ENCODE measurements at regions of chr15 and their contacts with region 1.

Region 1: DNA sequence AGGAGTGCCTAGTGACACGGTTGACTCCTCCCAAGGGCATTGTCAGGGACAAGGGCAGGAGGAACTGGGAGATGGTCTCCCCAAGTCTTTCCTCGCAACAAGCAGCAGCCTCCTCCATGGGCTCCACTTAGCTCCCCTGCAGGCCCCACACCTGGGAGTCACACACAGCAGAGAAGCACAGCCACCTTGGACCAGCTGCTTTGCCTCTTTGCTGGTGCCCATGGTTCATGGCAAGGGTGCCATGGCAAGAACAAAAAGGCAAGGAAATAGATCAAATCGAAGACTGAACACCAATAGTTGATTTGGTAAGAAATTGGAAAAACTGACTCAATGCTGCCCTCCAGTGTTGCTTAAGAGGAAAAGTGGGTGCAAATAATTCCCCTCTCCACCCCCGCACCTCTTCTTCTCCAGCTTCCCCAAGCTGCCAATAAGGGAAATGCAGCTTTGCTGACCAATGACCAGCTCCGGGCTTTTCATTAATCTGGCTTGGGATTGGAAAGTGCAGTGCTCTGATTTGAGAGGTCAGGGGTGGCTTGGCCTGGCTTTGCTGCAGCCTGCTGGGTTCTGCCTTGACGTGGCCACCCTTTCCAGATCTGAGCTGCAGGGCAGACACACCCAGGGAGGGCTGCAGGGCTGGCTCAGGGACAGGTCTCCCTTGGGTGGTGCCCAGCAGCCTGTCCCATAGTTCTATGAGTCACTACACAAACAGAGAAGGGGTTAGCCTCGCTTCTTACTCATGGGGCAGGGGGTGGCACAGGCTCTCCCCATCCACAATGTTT is 162.0 kb downstream of the KLF13 start:
- DNase-seq: peak; percentile 80
- ATAC-seq: peak; percentile 93
- H3K4me3 ChIP-seq: 0 out of 4 replicates have a peak overlapping the region, but pooled peaks of 1 of the 2 experiments have one; percentile 9
- H3K27ac ChIP-seq: peak overlapping the region; percentile 47; the same call in 1 of the 2 replicates
- H3K4me1 ChIP-seq: peaks cover 19 to 21% of the 10 kb centered on the region in 2 experiments
- H3K27me3 ChIP-seq: no peaks in the 10 kb centered on the region
- CTCF ChIP-seq: peak; percentile 78 to 90 (median 84)
- POLR2A ChIP-seq: no peak
- RAD21 ChIP-seq: peak; percentile 77

Region 2: DNA sequence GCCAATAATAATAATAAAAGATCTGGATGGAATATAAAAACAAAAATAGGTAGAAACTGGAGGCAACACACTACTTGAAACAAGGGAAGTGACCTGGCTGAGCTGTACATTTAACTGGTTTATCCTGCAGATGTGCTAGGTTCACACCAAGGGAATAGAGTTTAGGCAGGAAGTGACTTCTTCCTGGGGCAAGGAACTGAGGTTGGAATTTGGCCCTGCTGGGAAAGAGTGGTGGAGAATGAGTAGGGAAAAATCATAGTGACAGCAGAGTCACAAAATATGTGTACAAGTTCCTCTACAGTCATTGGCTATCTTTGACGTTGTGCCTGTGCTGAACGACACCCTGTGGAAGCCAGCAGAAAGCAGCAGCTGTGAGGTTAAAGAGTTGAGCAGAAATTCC is 818.6 kb before region 1 on chr15:
- CTCF ChIA-PET with region 1: interaction called, 3 read pairs
- POLR2A ChIA-PET with region 1: no interaction called
- RAD21 ChIA-PET with region 1: no interaction called
- intact Hi-C with region 1: loop called (anchors 10 kb)
- DNase-seq: no peak
- ATAC-seq: no peak
- H3K4me3 ChIP-seq: no peak overlapping the region
- H3K27ac ChIP-seq: no peak overlapping the region
- H3K4me1 ChIP-seq: no peaks in the 10 kb centered on the region
- H3K27me3 ChIP-seq: no peaks in the 10 kb centered on the region
- CTCF ChIP-seq: no peak
- POLR2A ChIP-seq: no peak
- RAD21 ChIP-seq: no peak

Region 3: DNA sequence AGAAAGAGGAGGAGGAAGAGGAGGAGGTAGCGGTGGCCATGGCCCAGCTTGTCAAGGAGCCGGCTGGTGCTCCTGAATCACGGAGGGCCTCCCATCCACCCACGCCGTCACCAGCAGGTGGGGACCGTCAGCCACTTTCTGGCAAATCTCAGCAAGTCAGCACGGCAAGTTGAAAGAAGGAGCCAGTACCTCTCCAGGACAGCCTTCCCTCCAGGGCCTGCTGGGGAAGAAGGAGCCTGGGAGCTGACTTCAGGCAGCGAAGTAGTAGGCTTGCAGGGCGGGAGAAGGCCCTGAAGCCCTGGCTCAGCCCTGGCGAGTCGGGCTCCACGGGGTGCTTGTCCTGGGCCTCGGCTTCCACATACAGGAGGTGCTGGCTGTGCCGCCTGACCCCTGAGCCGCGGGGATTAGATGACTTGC is 287.9 kb before region 1 on chr15:
- CTCF ChIA-PET with region 1: interaction called, 16 read pairs
- POLR2A ChIA-PET with region 1: no interaction called
- RAD21 ChIA-PET with region 1: interaction called in 1 of 2 experiments, 5 read pairs
- intact Hi-C with region 1: loop called (anchors 2 kb)
- DNase-seq: no peak
- ATAC-seq: peak; percentile 80
- H3K4me3 ChIP-seq: no peak overlapping the region
- H3K27ac ChIP-seq: no peak overlapping the region
- H3K4me1 ChIP-seq: no peaks in the 10 kb centered on the region
- H3K27me3 ChIP-seq: no peaks in the 10 kb centered on the region; the same call in 1 of the 2 replicates
- CTCF ChIP-seq: peak; percentile 32 to 45 (median 36); a peak in 4 of 6 replicates
- POLR2A ChIP-seq: no peak
- RAD21 ChIP-seq: peak; percentile 57

Region 4: GRCh38 chr15:31326156-31326732 is 162.4 kb before region 1 on chr15:
- CTCF ChIA-PET with region 1: interaction called, 6 read pairs
- POLR2A ChIA-PET with region 1: no interaction called
- RAD21 ChIA-PET with region 1: no interaction called
- intact Hi-C with region 1: loop called (anchors 2 kb)
- DNase-seq: peak; percentile 91
- ATAC-seq: peak; percentile 84
- H3K4me3 ChIP-seq: peak overlapping the region; percentile 56 to 80
- H3K27ac ChIP-seq: peak overlapping the region; percentile 94
- H3K4me1 ChIP-seq: peaks cover 11 to 24% of the 10 kb centered on the region in 2 experiments; a peak in 2 of 4 replicates
- H3K27me3 ChIP-seq: no peaks in the 10 kb centered on the region
- CTCF ChIP-seq: no peak
- POLR2A ChIP-seq: peak; percentile 30
- RAD21 ChIP-seq: no peak

Region 5: GRCh38 chr15:31435261-31435911 is 53.2 kb before region 1 on chr15:
- CTCF ChIA-PET with region 1: interaction called, 35 read pairs
- POLR2A ChIA-PET with region 1: no interaction called
- RAD21 ChIA-PET with region 1: interaction called, 4 to 7 read pairs
- intact Hi-C with region 1: loop called (anchors 1 kb)
- DNase-seq: peak; percentile 59
- ATAC-seq: peak; percentile 91
- H3K4me3 ChIP-seq: no peak overlapping the region
- H3K27ac ChIP-seq: no peak overlapping the region
- H3K4me1 ChIP-seq: peaks cover 5 to 13% of the 10 kb centered on the region in 2 experiments
- H3K27me3 ChIP-seq: no peaks in the 10 kb centered on the region
- CTCF ChIP-seq: peak; percentile 75 to 98 (median 93)
- POLR2A ChIP-seq: no peak
- RAD21 ChIP-seq: peak; percentile 87

Region 6: GRCh38 chr15:31977812-31978661 is 489.4 kb after region 1 on chr15:
- CTCF ChIA-PET with region 1: interaction called, 5 read pairs
- POLR2A ChIA-PET with region 1: no interaction called
- RAD21 ChIA-PET with region 1: no interaction called
- intact Hi-C with region 1: loop called (anchors 5 kb)
- DNase-seq: peak; percentile 32
- ATAC-seq: peak; percentile 91
- H3K4me3 ChIP-seq: peak overlapping the region; percentile 26 to 39
- H3K27ac ChIP-seq: no peak overlapping the region
- H3K4me1 ChIP-seq: peaks cover 6 to 25% of the 10 kb centered on the region in 2 experiments
- H3K27me3 ChIP-seq: 0 out of 2 replicates have a peak, but pooled peaks cover 5% of the 10 kb centered on the region
- CTCF ChIP-seq: peak; percentile 68 to 92 (median 88)
- POLR2A ChIP-seq: no peak
- RAD21 ChIP-seq: peak; percentile 68